CD8-positive, alpha-beta T cell (primary cell): ENCODE measurements at regions of chr17 and their contacts with region 1.

Region 1: DNA sequence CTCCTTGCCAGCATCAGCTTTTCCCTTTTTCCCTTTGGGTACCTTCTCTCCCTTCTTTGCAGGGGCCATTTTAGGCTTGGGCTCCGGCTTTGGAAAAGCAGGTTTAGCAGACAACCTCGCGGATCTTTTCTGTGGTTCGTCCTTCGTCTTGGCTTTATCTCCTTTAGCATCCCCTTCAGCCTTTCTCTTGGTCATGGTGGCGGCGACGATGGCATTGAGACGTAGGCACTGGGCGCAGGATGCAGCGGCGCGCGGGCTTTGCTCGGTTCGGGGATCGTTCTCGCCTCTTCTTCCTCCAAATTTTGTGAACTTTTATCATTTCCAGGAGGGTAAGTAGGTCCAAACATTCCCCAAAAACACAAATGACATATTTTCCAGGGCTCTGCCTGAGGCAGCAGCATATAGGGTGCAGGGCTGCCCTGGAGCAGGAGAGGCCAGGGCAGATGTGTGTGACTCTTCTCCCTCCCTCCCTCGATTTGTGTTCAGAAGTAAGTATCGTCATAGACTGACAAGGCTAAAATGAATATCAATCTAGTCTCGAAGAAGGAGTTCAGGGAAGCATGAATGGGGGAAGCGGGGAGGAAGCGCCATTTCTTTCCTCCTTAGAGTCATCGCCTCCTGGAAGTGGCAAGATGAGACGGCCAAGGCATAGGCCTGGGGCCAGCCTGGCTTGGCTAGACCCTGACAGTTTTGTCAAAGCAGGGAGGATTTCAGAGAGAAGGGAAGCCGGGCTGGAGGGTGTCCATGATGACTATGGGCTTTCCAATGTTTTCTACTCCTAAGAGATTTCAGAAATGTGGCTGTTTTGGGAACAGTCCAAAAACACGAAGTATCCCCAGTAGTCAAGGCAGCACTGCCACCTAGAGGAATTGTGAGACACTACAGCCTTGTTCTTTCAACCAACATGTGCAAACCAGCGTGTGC is 13.2 kb downstream of the CHCT1 start:
- DNase-seq: peak; percentile 8 to 79 (median 58)
- ATAC-seq: peak; percentile 83
- H3K4me3 ChIP-seq: no peak overlapping the region
- H3K4me3 Mint-ChIP-seq: no peak overlapping the region
- H3K27ac ChIP-seq: no peak overlapping the region
- H3K27ac Mint-ChIP-seq: no peak overlapping the region
- H3K4me1 ChIP-seq: no peaks in the 10 kb centered on the region
- H3K4me1 Mint-ChIP-seq: no peaks in the 10 kb centered on the region
- H3K27me3 ChIP-seq: peaks cover 0 to 2% of the 10 kb centered on the region in 2 experiments
- H3K27me3 Mint-ChIP-seq: peaks cover 4% of the 10 kb centered on the region
- CTCF ChIP-seq: peak; percentile 95

Region 2: DNA sequence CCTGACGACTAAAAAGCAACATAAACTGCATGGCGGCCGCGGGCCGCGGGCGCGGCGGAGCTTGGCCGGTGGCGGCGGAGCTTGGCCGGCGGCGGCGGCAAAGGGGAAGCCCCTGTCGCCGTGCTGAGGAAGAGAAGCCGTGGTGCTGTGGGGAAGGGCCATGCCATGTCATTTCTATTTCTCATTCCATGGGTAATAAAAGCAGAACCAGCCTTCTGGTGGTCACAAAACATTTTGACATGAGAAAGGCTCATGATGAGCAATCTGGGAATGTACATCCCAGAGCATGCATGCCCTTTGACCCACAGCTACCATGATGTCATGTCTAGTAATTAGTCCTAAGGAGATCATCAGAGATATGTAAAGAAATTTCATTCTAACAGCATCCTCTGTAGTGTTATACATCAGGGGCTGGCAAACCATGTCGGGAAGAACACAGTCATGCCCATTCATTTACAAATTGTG is 332.8 kb before region 1 on chr17:
- CTCF ChIA-PET with region 1: no interaction called
- POLR2A ChIA-PET with region 1: no interaction called
- intact Hi-C with region 1: loop called (anchors 10 kb)
- DNase-seq: peak in 4 of 9 experiments; percentile 7 to 52 (median 34)
- ATAC-seq: peak; percentile 65
- H3K4me3 ChIP-seq: no peak overlapping the region
- H3K4me3 Mint-ChIP-seq: peak overlapping the region; percentile 69
- H3K27ac ChIP-seq: no peak overlapping the region
- H3K27ac Mint-ChIP-seq: no peak overlapping the region
- H3K4me1 ChIP-seq: peaks cover 5% of the 10 kb centered on the region
- H3K4me1 Mint-ChIP-seq: peaks cover 11% of the 10 kb centered on the region
- H3K27me3 ChIP-seq: peaks cover 0 to 6% of the 10 kb centered on the region in 2 experiments
- H3K27me3 Mint-ChIP-seq: peaks cover 37% of the 10 kb centered on the region
- CTCF ChIP-seq: no peak

Region 3: GRCh38 chr17:60142872-60143499 is 292.5 kb before region 1 on chr17:
- CTCF ChIA-PET with region 1: interaction called, 5 read pairs
- POLR2A ChIA-PET with region 1: no interaction called
- intact Hi-C with region 1: loop called in 1 of 2 experiments (anchors 1 kb)
- DNase-seq: peak; percentile 44 to 78 (median 74)
- ATAC-seq: peak; percentile 70
- H3K4me3 ChIP-seq: no peak overlapping the region
- H3K4me3 Mint-ChIP-seq: no peak overlapping the region
- H3K27ac ChIP-seq: no peak overlapping the region
- H3K27ac Mint-ChIP-seq: no peak overlapping the region
- H3K4me1 ChIP-seq: peaks cover 15% of the 10 kb centered on the region
- H3K4me1 Mint-ChIP-seq: peaks cover 16% of the 10 kb centered on the region
- H3K27me3 ChIP-seq: peaks cover 41 to 42% of the 10 kb centered on the region in 2 experiments
- H3K27me3 Mint-ChIP-seq: peaks cover 81% of the 10 kb centered on the region
- CTCF ChIP-seq: peak; percentile 69

Region 4: DNA sequence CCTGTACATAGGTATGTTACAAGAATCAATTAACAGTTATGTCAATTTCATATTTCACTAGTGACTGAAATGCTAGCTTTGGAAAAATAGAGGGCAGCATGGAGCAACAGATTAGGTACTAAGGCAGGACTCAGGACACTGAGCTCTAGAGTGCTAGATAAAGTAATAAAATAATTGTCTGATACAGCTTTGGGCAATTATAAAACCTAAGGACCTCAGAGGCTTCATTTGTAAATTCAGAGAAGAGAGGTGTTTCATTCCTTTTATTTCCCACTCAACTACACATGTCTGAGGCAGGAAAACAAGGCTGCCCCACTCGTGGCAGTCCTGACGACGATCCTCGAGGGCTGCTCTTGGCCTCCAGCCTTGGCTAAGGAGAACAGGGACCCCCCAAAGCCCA is 204.3 kb before region 1 on chr17:
- CTCF ChIA-PET with region 1: no interaction called
- POLR2A ChIA-PET with region 1: no interaction called
- intact Hi-C with region 1: loop called in 1 of 2 experiments (anchors 5 kb)
- DNase-seq: peak in 1 of 9 experiments; percentile 3
- ATAC-seq: no peak
- H3K4me3 ChIP-seq: no peak overlapping the region
- H3K4me3 Mint-ChIP-seq: no peak overlapping the region
- H3K27ac ChIP-seq: no peak overlapping the region
- H3K27ac Mint-ChIP-seq: no peak overlapping the region
- H3K4me1 ChIP-seq: no peaks in the 10 kb centered on the region
- H3K4me1 Mint-ChIP-seq: no peaks in the 10 kb centered on the region
- H3K27me3 ChIP-seq: no peaks in the 10 kb centered on the region
- H3K27me3 Mint-ChIP-seq: no peaks in the 10 kb centered on the region
- CTCF ChIP-seq: no peak

Region 5: DNA sequence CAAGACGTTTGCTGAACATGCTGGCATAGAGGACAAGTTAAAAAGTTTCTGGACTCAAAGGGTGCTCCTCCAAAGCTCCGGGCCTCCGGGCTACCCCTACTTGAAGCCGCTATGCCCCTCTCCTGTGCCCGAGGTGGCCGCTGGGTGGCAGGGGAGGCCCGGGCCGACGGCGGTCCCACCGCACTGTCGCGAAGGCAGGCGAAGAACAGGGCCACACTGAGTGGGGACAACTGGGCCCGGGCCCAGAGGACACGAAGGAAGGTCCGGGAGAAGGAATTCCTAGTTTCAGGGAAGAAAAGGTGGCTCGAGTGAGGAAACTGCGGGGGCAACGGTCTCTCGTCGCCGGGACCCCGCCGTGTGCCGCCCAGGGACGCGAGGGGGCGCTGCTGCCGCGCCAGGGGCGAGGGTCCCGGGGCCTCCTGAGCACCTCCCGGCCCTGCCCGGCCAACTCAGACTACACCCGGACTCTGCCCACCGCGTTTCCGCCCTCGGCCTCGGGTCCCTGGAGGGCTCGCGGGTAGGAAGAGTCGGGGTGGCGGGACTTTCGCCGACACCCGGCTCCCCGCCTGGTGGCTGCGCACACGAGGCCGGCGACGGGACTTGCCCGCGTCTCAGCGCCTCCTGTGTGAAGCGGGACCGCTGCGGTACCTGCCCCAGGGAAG is 14.1 kb before region 1 on chr17:
- CTCF ChIA-PET with region 1: interaction called, 4 read pairs
- POLR2A ChIA-PET with region 1: no interaction called
- intact Hi-C with region 1: loop called (anchors 1 to 2 kb)
- DNase-seq: peak; percentile 50 to 84 (median 71)
- ATAC-seq: peak; percentile 93
- H3K4me3 ChIP-seq: peak overlapping the region; percentile 52 to 60
- H3K4me3 Mint-ChIP-seq: peak overlapping the region; percentile 83
- H3K27ac ChIP-seq: peak overlapping the region; percentile 24 to 40
- H3K27ac Mint-ChIP-seq: peak overlapping the region; percentile 72
- H3K4me1 ChIP-seq: peaks cover 8% of the 10 kb centered on the region
- H3K4me1 Mint-ChIP-seq: peaks cover 6% of the 10 kb centered on the region
- H3K27me3 ChIP-seq: no peaks in the 10 kb centered on the region
- H3K27me3 Mint-ChIP-seq: peaks cover 2% of the 10 kb centered on the region
- CTCF ChIP-seq: peak; percentile 100